ENCODE measurements at regions of chr6 and their contacts with region 1.

Region 1: DNA sequence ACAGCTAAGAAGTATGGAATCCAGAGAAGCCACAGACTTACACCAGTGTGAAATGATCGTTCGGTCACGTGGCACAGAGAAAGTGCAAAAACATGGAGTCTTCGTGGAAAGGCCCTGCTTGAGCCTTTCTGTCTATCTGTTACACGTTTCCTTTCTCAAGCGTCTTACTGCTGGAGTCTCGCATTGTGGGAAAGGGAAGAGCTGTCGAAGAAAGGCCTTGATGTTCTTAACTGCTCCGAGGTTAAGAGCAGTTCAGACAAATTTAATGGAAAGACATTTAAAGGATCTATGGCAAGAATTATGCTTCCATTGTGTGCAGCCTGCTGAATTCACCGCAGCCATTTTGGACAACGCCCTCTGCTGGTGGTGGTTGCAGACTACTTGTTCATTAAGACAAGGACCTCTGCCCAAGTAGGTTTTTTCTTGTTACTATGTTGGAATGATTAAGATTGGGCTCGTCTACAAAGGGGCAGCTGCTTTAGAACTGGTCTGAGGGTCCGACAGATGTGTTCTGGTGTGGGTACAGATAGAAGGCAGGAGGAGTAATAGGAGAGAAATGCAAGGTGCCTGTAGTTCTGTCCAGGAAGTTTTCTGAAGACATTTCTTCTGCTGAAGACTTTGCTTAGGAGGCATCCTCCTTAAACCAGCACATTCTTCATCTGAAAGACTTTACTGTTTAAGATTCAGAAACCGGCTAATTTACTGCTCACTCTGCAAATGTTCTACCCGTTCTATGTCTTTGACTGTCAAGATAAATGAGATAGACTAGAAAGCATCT is 24.7 kb upstream of the CCN6 start:
- DNase-seq: peak; percentile 60
- CTCF ChIP-seq: peak; percentile 75

Region 2: DNA sequence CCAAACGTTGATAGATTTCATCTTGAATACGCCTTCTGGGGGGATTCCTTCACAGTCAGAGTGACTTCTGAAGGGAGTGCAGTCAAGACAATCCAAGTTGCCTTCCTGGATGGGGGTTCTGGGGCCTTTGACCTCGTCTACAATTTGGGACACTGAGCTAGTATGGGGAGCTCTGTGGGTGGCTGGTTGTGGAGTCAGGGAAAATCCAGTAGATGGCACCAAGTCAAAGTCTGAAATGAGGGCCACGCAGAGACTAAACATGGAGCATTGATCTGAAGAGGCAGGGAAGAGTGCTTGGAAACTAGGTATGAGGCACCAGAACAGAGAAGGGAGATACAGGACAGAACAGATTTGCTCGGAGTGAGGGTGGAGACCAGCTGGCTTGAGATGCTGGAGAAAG is 18.9 kb before region 1 on chr6:
- CTCF ChIA-PET with region 1: interaction called, 15 read pairs
- POLR2A ChIA-PET with region 1: no interaction called
- DNase-seq: no peak
- CTCF ChIP-seq: peak; percentile 4

Region 3: GRCh38 chr6:112018619-112019416 is 10.4 kb before region 1 on chr6:
- CTCF ChIA-PET with region 1: interaction called, 27 read pairs
- POLR2A ChIA-PET with region 1: no interaction called
- DNase-seq: no peak
- CTCF ChIP-seq: no peak

Measured in GM10248 (cell line).